WTC11 (cell line): ENCODE measurements at regions of chr10 and their contacts with region 1.

Region 1: GRCh38 chr10:30359373-30360206 is 10.5 kb upstream of the MTPAP start:
- DNase-seq: peak; percentile 85
- ATAC-seq: peak; percentile 91
- H3K4me3 Mint-ChIP-seq: no peak overlapping the region
- H3K27ac Mint-ChIP-seq: no peak overlapping the region
- H3K4me1 Mint-ChIP-seq: peaks cover 9% of the 10 kb centered on the region
- H3K27me3 Mint-ChIP-seq: no peaks in the 10 kb centered on the region; the same call in none of the 2 replicates
- CTCF ChIP-seq: peak; percentile 95

Region 2: GRCh38 chr10:30348378-30348776 is 11.2 kb before region 1 on chr10:
- CTCF ChIA-PET with region 1: interaction called, 39 read pairs
- POLR2A ChIA-PET with region 1: interaction called, 3 read pairs
- DNase-seq: no peak
- ATAC-seq: no peak
- H3K4me3 Mint-ChIP-seq: peak overlapping the region; percentile 94
- H3K27ac Mint-ChIP-seq: peak overlapping the region; percentile 97
- H3K4me1 Mint-ChIP-seq: peaks cover 26% of the 10 kb centered on the region
- H3K27me3 Mint-ChIP-seq: peaks cover 2% of the 10 kb centered on the region; the same call in 1 of the 2 replicates
- CTCF ChIP-seq: no peak

Region 3: DNA sequence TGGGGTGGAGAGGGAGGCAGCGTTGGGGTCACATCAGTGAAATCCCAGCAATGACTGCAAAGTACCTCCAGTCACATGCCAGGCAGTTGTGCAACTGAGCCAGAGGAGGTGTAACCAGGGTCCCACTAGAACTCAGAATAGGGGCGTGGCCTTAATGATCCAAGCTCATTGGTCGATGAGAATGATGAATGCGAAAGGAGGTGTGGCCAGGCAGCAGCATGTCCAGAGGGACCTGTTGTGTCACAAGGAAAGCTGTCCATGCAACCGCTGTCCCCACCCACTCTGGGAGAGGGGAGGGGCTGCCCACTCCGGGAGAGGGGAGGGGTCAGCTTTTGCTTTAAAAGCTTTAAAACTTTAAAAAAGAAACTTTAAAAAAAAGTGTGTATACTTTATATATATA is 14.8 kb after region 1 on chr10:
- CTCF ChIA-PET with region 1: interaction called, 32 read pairs
- POLR2A ChIA-PET with region 1: no interaction called
- DNase-seq: peak; percentile 71
- ATAC-seq: peak; percentile 90
- H3K4me3 Mint-ChIP-seq: no peak overlapping the region
- H3K27ac Mint-ChIP-seq: no peak overlapping the region
- H3K4me1 Mint-ChIP-seq: peaks cover 48% of the 10 kb centered on the region
- H3K27me3 Mint-ChIP-seq: peaks cover 19% of the 10 kb centered on the region
- CTCF ChIP-seq: no peak